Caco-2 (cell line): ENCODE measurements at regions of chr20 and their contacts with region 1.

Region 1: DNA sequence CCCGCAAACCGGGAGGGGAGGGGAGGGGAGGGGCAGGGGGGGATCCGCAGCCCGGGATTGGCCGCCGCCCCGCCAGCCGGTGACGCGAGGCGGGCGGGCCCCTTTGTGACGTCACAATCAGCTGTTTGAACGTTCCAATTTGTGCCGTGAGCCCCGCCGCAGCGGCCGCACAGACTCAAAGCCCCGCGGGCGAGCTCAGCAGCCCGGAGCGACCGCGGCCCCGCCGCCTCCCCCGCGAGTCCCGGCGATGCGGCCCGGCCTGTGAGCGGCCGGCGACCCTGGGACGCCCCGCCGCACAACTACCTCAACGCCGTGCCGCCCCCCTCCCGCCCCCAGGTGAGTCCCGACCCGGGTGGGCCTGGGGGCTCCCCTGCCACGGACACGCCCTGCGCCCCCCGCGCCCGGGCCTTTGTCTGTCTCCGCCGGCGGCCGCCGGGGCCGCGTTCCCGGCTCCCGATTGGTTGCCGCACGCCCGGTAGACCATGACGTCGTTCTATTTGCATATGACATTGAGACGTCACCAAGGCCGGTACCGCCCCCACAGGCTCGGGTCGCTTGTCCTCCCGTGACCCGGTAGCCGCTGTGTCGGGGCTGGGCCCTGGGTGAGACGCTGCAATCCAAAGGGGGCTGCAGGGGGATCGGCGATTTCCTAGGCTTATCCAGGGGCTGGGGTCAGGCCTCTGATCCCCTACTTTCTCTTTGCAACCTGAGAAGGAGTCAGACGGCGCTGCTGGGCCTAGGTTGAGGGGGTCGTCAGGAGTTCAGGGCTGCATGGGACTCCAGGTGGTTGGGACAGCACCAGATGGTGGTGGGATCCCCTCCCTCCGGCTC is at the start of gene TP53INP2:
- DNase-seq: peak; percentile 99
- H3K4me3 ChIP-seq: peak within 1 kb of the TSS; percentile 48
- H3K4me3 Mint-ChIP-seq: peak within 1 kb of the TSS; percentile 99
- H3K27ac Mint-ChIP-seq: peak within 1 kb of the TSS; percentile 99
- H3K4me1 ChIP-seq: peaks cover 34% of the 10 kb centered on the region
- H3K4me1 Mint-ChIP-seq: peaks cover 44% of the 10 kb centered on the region
- H3K27me3 ChIP-seq: no peaks in the 10 kb centered on the region
- H3K27me3 Mint-ChIP-seq: peaks cover 3% of the 10 kb centered on the region
- CTCF ChIP-seq: no peak
- total RNA-seq, gene TP53INP2: 26.2 and 29.7 TPM in 2 replicates

Region 2: GRCh38 chr20:34190679-34191090 is 513.7 kb before region 1 on chr20:
- CTCF ChIA-PET with region 1: interaction called, 5 read pairs
- POLR2A ChIA-PET with region 1: interaction called, 4 read pairs
- intact Hi-C with region 1: loop called (anchors 2 kb)
- DNase-seq: peak; percentile 88 to 89
- H3K4me3 ChIP-seq: no peak overlapping the region
- H3K4me3 Mint-ChIP-seq: no peak overlapping the region
- H3K27ac Mint-ChIP-seq: no peak overlapping the region
- H3K4me1 ChIP-seq: no peaks in the 10 kb centered on the region
- H3K4me1 Mint-ChIP-seq: no peaks in the 10 kb centered on the region
- H3K27me3 ChIP-seq: no peaks in the 10 kb centered on the region; the same call in 1 of the 2 replicates
- H3K27me3 Mint-ChIP-seq: peaks cover 9% of the 10 kb centered on the region
- CTCF ChIP-seq: peak; percentile 97 to 99

Region 3: DNA sequence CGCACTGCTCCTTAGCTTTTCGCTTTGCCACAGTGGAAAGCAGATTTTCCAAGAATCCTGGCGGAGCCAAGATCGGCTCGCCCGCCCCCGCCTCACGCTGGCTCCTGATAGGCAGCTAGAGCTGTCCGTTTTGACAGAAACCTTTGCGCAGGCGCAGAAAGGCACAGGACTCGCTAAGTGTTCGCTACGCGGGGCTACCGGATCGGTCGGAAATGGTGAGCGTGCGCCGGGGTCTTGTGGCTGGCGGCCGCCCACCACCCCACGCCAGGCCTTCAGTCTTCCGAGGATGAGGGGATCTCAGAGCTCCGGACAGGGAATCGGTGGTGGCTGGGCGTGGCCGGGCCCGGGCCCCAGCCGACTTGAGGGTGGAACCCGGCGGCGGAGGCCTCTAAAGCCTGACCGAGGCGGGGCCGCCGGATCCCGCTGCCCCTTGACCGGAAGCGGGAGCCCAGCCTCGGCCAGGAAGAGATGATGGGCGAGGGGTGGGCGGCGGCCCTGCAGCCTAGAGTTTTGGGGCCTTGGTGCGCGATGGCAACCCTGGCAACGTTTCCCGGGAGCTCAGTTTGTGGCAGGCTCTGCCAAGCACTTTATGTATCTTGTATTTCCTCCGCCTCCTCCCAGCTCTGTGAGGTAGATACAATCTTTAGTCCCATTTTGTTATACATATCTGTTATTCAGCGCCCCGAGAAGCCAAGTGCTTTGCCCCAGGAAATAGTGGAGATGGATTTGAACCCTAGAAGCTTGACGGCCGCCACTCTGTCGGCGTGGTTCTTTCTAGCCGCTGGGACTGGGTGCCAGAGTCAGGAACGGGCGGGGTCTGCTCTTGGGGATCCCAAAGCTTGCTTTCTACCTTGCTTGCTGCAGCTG is 187.9 kb before region 1 on chr20 and contains the start of gene DYNLRB1:
- CTCF ChIA-PET with region 1: interaction called, 6 read pairs
- POLR2A ChIA-PET with region 1: interaction called, 21 read pairs
- intact Hi-C with region 1: no loop called
- DNase-seq: peak; percentile 100
- H3K4me3 ChIP-seq: peak within 1 kb of the TSS; percentile 52
- H3K4me3 Mint-ChIP-seq: peak within 1 kb of the TSS; percentile 85
- H3K27ac Mint-ChIP-seq: peak within 1 kb of the TSS; percentile 91
- H3K4me1 ChIP-seq: peaks cover 6% of the 10 kb centered on the region
- H3K4me1 Mint-ChIP-seq: peaks cover 19% of the 10 kb centered on the region
- H3K27me3 ChIP-seq: no peaks in the 10 kb centered on the region
- H3K27me3 Mint-ChIP-seq: no peaks in the 10 kb centered on the region
- CTCF ChIP-seq: no peak
- total RNA-seq, gene DYNLRB1: 357 and 359 TPM in 2 replicates

Region 4: DNA sequence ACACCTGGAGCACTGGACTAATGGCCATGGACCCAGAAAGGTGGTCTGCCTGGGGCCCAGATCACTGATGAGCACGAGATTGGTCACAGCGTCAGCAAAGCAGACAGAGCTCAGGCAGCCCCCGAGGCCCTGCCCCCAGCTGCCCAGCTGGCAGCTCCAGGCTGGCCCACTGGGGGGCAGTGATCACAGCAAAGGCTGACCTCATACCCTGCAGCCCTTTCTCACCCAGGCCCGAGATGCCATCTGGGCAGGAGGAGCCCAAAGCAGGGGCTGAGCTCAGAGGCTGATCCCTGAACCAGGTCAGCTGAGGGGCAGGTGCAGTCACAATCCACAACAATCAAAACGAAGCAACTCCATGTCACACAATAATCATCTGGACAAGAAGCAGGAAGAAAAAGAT is 141.7 kb before region 1 on chr20:
- CTCF ChIA-PET with region 1: interaction called, 12 read pairs
- POLR2A ChIA-PET with region 1: no interaction called
- intact Hi-C with region 1: no loop called
- DNase-seq: peak in 1 of 2 experiments; percentile 56
- H3K4me3 ChIP-seq: no peak overlapping the region
- H3K4me3 Mint-ChIP-seq: no peak overlapping the region
- H3K27ac Mint-ChIP-seq: no peak overlapping the region
- H3K4me1 ChIP-seq: no peaks in the 10 kb centered on the region
- H3K4me1 Mint-ChIP-seq: no peaks in the 10 kb centered on the region
- H3K27me3 ChIP-seq: no peaks in the 10 kb centered on the region
- H3K27me3 Mint-ChIP-seq: no peaks in the 10 kb centered on the region
- CTCF ChIP-seq: peak; percentile 52 to 61

Region 5: GRCh38 chr20:34621383-34622367 is 82.7 kb before region 1 on chr20:
- CTCF ChIA-PET with region 1: interaction called, 3 read pairs
- POLR2A ChIA-PET with region 1: interaction called, 3 read pairs
- intact Hi-C with region 1: loop called (anchors 5 kb)
- DNase-seq: peak; percentile 65 to 74
- H3K4me3 ChIP-seq: no peak overlapping the region
- H3K4me3 Mint-ChIP-seq: no peak overlapping the region
- H3K27ac Mint-ChIP-seq: peak overlapping the region; percentile 3
- H3K4me1 ChIP-seq: peaks cover 12% of the 10 kb centered on the region
- H3K4me1 Mint-ChIP-seq: peaks cover 12% of the 10 kb centered on the region
- H3K27me3 ChIP-seq: no peaks in the 10 kb centered on the region
- H3K27me3 Mint-ChIP-seq: no peaks in the 10 kb centered on the region
- CTCF ChIP-seq: no peak

Region 6: GRCh38 chr20:34676642-34677373 is 27.6 kb before region 1 on chr20 and contains the start of gene PIGU:
- CTCF ChIA-PET with region 1: interaction called, 3 read pairs
- POLR2A ChIA-PET with region 1: interaction called, 40 read pairs
- intact Hi-C with region 1: loop called (anchors 1 kb)
- DNase-seq: peak; percentile 99 to 100
- H3K4me3 ChIP-seq: peak within 1 kb of the TSS; percentile 88
- H3K4me3 Mint-ChIP-seq: peak within 1 kb of the TSS; percentile 86
- H3K27ac Mint-ChIP-seq: peak within 1 kb of the TSS; percentile 92
- H3K4me1 ChIP-seq: peaks cover 11% of the 10 kb centered on the region
- H3K4me1 Mint-ChIP-seq: peaks cover 26% of the 10 kb centered on the region
- H3K27me3 ChIP-seq: no peaks in the 10 kb centered on the region
- H3K27me3 Mint-ChIP-seq: no peaks in the 10 kb centered on the region
- CTCF ChIP-seq: peak; percentile 32 to 49
- total RNA-seq, gene PIGU: 61.7 and 62.9 TPM in 2 replicates

Region 7: DNA sequence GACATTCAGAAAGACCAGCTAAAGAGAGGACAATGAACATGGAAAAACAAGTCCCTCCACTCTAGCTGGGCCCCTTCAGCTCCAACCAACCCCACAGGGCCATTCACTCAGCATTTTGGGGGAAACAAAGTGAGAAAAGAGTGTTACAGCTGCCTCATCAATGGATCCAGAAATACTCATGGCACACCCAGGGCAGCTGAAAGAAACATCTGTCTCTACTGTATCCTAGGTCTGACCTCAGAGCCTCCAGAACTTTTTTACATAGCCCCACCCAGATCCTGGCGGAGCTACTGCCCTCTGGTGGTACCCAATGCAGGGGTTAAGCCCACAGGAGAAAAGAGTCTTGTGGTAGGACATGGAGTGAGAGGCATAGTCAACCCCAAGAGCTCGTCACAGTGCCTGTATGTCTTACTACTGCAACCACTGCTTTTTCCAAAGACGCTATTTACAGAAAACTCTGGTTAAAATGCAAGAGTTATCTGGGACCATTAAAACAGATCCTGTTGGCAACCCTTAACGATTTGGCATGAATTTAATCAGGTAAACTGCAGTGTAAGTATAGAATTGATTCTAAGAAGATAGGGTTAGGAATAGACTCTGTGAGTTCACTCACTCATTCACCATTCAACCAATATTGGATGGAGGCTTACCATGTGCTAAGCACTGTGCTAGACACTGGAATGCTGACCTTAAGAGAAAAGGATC is 625.2 kb after region 1 on chr20:
- CTCF ChIA-PET with region 1: no interaction called
- POLR2A ChIA-PET with region 1: interaction called, 12 read pairs
- intact Hi-C with region 1: no loop called
- DNase-seq: peak; percentile 91 to 93
- H3K4me3 ChIP-seq: no peak overlapping the region
- H3K4me3 Mint-ChIP-seq: no peak overlapping the region
- H3K27ac Mint-ChIP-seq: peak overlapping the region; percentile 69
- H3K4me1 ChIP-seq: peaks cover 55% of the 10 kb centered on the region
- H3K4me1 Mint-ChIP-seq: peaks cover 32% of the 10 kb centered on the region
- H3K27me3 ChIP-seq: no peaks in the 10 kb centered on the region
- H3K27me3 Mint-ChIP-seq: no peaks in the 10 kb centered on the region
- CTCF ChIP-seq: peak; percentile 92 to 99